ENCODE measurements at regions of chr10 and their contacts with region 1.

Region 1: DNA sequence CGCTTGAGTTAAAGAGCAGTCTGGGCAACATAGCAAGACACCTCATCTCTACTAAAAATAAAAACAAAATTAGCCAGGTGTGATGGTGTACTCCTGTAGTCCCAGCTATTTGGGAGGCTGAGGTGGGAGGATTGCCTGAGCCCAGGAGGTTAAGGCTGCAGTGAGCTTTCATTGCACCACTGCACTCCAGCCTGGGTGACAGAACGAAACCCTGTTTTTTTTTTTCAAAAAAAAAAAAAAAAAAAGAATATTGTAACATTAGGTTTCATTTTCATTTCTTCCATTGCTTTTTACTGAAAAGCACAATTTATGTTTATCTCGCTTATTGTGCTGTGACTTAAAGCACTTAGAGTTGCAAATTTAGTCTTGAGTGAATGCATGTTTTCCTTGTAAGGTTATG is 80.0 kb downstream of the MLLT10 start:
- DNase-seq: no peak
- ATAC-seq: peak; percentile 12
- H3K4me3 Mint-ChIP-seq: no peak overlapping the region
- H3K27ac Mint-ChIP-seq: no peak overlapping the region
- H3K4me1 Mint-ChIP-seq: peaks cover 29% of the 10 kb centered on the region
- H3K27me3 Mint-ChIP-seq: no peaks in the 10 kb centered on the region

Region 2: DNA sequence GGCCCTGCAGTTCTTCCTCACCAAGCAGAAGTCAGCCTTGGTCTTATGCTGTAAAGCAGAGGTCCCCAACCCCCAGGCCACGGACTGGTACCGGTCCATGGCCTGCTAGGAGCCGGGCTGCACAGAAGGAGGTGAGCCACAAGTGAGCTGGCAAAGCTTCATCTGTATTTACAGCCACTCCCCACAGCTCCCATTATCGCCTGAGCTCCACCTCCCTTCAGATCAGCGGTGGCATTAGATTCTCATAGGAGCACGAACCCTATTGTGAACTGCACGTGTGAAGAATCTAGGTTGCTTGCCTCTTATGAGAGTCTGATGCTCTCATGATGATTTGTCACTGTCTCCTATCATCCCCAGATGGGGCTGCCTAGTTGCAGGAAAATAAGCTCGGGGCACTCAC is 629.3 kb before region 1 on chr10:
- CTCF ChIA-PET with region 1: no interaction called
- POLR2A ChIA-PET with region 1: no interaction called
- intact Hi-C with region 1: no loop called
- DNase-seq: no peak
- ATAC-seq: no peak
- H3K4me3 Mint-ChIP-seq: no peak overlapping the region
- H3K27ac Mint-ChIP-seq: no peak overlapping the region
- H3K4me1 Mint-ChIP-seq: no peaks in the 10 kb centered on the region
- H3K27me3 Mint-ChIP-seq: peaks cover 2% of the 10 kb centered on the region

Region 3: GRCh38 chr10:21406595-21407193 is 207.3 kb before region 1 on chr10:
- CTCF ChIA-PET with region 1: no interaction called
- POLR2A ChIA-PET with region 1: no interaction called
- intact Hi-C with region 1: no loop called
- DNase-seq: peak; percentile 27
- ATAC-seq: peak; percentile 96
- H3K4me3 Mint-ChIP-seq: no peak overlapping the region
- H3K27ac Mint-ChIP-seq: peak overlapping the region; percentile 59
- H3K4me1 Mint-ChIP-seq: peaks cover 18% of the 10 kb centered on the region
- H3K27me3 Mint-ChIP-seq: no peaks in the 10 kb centered on the region

Region 4: DNA sequence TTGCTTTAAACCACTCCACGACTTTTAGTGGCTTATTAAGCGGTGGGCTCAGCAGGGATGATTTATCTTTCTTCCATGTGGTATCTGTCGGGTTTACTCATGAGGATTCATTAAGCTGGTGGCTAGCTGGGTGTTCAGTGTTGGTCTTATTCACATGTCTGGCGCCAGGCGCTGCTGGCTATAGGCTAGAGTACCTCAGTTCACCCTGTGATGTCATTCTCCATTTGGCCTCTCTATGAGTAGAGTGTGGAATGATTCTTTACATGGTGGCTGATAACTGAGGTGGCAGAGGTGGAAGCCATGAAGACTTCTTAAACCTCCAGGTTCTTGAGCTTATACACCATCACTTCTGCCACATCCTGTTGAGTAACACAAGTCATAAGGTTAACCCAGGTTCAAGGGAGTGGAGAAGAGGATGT is 35.5 kb after region 1 on chr10:
- CTCF ChIA-PET with region 1: no interaction called
- POLR2A ChIA-PET with region 1: no interaction called
- intact Hi-C with region 1: loop called in 1 of 2 experiments (anchors 5 kb)
- DNase-seq: peak; percentile 31
- ATAC-seq: peak; percentile 97
- H3K4me3 Mint-ChIP-seq: no peak overlapping the region
- H3K27ac Mint-ChIP-seq: peak overlapping the region; percentile 61
- H3K4me1 Mint-ChIP-seq: peaks cover 21% of the 10 kb centered on the region
- H3K27me3 Mint-ChIP-seq: no peaks in the 10 kb centered on the region